Head of caudate nucleus (tissue), 42 donors: ENCODE measurements at regions of chr1 and their contacts with region 1.

Region 1: GRCh38 chr1:99264201-99265021 is at the start of gene PLPPR4:
- DNase-seq: peak; percentile 6 to 85 (median 64)

Region 2: DNA sequence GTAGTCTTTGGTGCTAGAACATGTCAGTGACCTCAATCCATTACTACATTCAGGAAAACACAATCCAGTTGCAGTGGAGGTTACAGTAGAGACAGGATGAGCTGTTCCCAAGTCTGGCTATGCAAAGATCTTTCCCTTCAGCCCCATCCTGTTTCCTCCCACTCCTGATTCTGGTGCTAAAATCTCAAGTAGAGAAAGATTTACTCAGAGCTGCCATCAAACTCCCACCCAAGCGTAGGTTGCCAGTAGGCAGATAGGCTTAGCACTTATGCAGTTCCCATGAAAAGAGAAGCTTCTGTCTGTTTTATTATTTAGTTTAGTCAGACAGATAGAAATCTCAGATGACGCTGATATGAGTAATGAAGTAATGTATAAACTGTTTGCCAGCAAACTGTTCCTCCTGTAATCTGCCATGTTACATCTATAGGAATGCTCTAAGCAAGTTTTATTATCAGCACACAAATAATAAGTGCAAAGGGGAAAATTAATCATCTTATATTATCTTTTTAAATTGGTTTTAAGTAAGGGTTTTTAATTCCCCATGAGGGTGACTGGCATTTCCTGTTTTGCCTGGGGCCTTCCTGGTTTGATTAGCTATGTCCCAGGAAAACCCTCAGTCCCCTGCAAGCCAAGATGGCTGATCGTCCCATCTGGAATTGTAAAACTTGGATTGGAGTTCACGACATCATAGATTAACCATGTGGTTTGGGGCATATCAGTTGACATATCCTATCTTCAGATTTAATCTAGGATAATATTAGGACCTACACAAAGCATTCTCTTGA is 193.2 kb after region 1 on chr1:
- intact Hi-C with region 1: loop called (anchors 10 kb)
- DNase-seq: peak in 34 of 42 donors; percentile 12 to 91 (median 59)

Region 3: DNA sequence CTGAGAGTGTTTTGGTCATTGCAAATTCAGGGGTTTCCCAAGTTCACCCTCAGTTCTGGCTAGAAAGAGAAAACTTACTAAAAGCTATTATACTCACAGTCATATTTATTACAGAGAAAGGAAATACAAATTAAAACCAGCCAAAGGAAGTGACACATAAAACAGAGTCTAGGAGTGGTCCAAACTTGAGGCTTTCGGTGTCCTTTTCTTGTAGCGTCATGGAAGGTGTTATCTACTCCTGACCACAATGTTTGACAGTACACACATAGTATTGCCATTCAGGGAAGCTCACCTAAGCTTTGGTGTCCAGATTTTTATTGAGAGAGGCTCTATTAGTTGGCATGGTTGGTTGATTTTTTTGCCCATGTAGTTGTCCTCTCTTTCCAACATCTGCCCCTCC is 764.4 kb after region 1 on chr1:
- intact Hi-C with region 1: no loop called
- DNase-seq: no peak